Ovary (tissue), 10 donors: ENCODE measurements at regions of chr1 and their contacts with region 1.

Region 1: DNA sequence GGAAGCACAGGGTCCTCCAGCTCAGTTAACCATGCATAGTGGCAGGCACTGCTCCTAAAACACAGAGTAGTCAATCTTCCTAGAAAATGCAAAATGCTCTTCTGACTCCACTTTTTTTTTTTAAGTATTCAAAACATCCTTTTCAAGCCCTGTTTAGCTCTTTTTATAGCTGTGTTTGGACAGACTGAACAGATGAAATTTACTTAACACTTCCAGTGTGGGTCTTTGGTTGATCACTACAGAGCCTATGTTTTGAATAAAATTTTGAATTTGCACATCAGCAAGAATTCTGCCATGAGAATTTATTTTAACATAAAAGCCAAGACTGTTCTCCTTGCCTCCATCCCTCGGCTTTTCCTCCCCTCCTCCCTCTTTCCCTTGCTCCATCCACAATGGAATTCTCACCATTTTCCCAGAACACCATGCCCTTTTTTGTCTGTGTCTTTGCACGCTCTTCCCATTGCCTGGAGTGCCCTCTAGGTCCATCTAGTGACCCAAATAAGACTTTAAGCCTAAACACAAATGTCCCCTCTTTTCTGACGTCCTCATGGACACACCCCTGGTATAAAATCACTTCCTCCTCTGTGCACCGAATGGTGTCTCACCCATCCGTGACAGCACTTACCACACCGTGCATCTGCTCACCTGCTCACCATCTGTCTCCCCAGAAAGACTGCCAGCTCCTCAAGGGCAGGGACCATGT is 24.0 kb upstream of the CPT2 start:
- DNase-seq: no peak
- H3K4me3 ChIP-seq: no peak overlapping the region
- H3K27ac ChIP-seq: no peak overlapping the region
- H3K4me1 ChIP-seq: peaks cover 8% of the 10 kb centered on the region
- H3K27me3 ChIP-seq: no peaks in the 10 kb centered on the region
- CTCF ChIP-seq: no peak
- EP300 ChIP-seq: no peak
- POLR2A ChIP-seq: no peak

Region 2: GRCh38 chr1:53073868-53074311 is 98.7 kb before region 1 on chr1:
- intact Hi-C with region 1: loop called in 1 of 4 experiments (anchors 10 kb)
- DNase-seq: peak; percentile 78 to 96 (median 87)
- H3K4me3 ChIP-seq: no peak overlapping the region
- H3K27ac ChIP-seq: peak overlapping the region; percentile 79 to 87
- H3K4me1 ChIP-seq: peaks cover 7% of the 10 kb centered on the region
- H3K27me3 ChIP-seq: no peaks in the 10 kb centered on the region
- CTCF ChIP-seq: no peak
- EP300 ChIP-seq: no peak
- POLR2A ChIP-seq: peak; percentile 9

Region 3: GRCh38 chr1:53220171-53220961 is 47.8 kb after region 1 on chr1 and contains the start of gene CZIB:
- intact Hi-C with region 1: no loop called
- DNase-seq: peak; percentile 95 to 98 (median 96)
- H3K4me3 ChIP-seq: peak within 1 kb of the TSS; percentile 91
- H3K27ac ChIP-seq: peak within 1 kb of the TSS; percentile 95 to 96
- H3K4me1 ChIP-seq: no peaks in the 10 kb centered on the region
- H3K27me3 ChIP-seq: no peaks in the 10 kb centered on the region
- CTCF ChIP-seq: peak in 2 of 3 donors; percentile 15 to 44
- EP300 ChIP-seq: no peak
- POLR2A ChIP-seq: peak; percentile 96
- total RNA-seq, gene CZIB: 48.4 to 81.4 (median 67.3) TPM

Region 4: GRCh38 chr1:53413175-53414001 is 240.8 kb after region 1 on chr1:
- intact Hi-C with region 1: no loop called
- DNase-seq: no peak
- H3K4me3 ChIP-seq: no peak overlapping the region
- H3K27ac ChIP-seq: no peak overlapping the region
- H3K4me1 ChIP-seq: no peaks in the 10 kb centered on the region
- H3K27me3 ChIP-seq: no peaks in the 10 kb centered on the region
- CTCF ChIP-seq: no peak
- EP300 ChIP-seq: no peak
- POLR2A ChIP-seq: no peak